H1 (cell line): ENCODE measurements at regions of chr5 and their contacts with region 1.

Region 1: DNA sequence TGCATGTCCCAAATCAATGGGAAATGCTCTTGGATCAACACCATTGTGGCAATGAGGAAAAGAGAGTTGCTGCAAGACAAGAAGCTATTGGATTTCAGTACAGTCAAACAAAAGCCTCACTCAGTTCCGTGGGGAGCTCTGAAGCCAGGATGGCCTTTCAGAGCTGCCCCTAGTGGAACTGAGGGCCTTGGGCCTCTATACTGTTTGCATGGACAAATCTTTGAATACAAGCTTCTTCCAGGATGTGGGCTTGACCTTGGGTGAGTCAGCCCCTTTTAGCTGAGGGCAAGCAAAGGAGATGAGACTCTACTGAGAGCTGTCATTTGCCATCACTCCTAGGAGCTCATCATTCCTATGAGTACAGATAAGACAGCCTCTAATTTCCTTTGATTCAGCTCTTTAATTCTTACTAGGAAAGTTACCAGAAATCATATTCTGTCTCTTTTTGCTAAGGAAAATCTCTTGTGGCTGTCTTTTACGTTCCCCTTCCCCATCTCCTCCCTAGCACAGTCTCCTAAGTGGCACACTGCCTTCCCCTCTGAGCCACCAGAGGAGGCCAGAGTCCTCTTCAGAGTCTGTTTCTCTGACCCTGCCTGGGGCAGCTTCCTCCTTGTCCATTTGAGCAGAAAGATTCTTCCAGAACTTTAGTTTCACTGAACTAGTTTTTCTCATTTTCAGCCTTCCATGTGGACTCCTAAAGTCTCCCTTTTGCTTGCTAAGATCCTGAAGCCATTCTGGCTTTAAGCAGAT is 168.8 kb upstream of the POC5 start:
- DNase-seq: no peak
- H3K4me3 ChIP-seq: no peak overlapping the region
- H3K27ac ChIP-seq: no peak overlapping the region
- H3K4me1 ChIP-seq: no peaks in the 10 kb centered on the region
- H3K27me3 ChIP-seq: no peaks in the 10 kb centered on the region
- CTCF ChIP-seq: peak; percentile 63 to 70 (median 67)
- EP300 ChIP-seq: no peak
- POLR2A ChIP-seq: no peak
- RAD21 ChIP-seq: peak; percentile 82 to 84

Region 2: DNA sequence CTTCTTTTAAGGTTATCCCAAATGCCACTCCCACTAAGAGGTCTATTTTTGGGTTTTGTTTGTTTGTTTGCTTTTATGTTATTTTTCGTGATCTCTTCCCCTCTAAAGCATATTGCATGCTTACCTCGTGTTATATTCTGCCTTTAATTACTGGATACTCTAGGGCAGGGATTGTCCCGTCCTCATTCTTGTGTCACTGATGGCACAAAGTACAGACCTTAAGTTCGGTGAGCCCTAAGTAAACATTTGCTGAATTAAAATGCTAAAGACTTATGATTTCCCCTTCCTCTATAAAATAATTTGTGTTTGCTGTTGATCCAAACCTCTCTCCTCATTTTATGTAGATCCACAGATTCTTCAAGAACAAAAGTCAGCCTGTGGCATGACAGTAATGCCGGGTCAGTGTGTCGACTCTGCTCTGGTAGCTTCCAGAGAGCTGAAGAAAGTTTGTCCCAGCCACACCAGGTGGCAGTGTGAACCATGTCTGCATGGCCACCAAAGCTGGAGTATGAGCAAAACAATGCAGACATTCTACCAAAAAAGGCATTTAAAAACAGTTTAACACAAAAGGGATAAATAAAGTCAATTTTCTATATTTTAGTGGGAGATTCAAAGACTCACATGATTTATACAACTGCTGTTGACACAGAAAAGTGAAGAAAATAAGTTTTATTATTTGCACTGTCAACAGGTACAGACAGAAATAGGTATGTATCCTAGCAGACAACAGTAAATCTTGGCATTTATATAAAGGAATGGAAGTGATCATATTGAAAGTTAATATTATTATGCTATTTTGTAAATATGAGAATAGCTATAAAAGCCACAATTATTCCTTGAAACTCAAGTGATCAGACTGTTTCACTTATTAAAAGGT is 150.9 kb before region 1 on chr5:
- CTCF ChIA-PET with region 1: interaction called, 21 read pairs
- POLR2A ChIA-PET with region 1: no interaction called
- DNase-seq: peak; percentile 23 to 51
- H3K4me3 ChIP-seq: no peak overlapping the region
- H3K27ac ChIP-seq: no peak overlapping the region
- H3K4me1 ChIP-seq: no peaks in the 10 kb centered on the region
- H3K27me3 ChIP-seq: no peaks in the 10 kb centered on the region
- CTCF ChIP-seq: peak; percentile 56 to 70 (median 61)
- EP300 ChIP-seq: no peak
- POLR2A ChIP-seq: no peak
- RAD21 ChIP-seq: peak; percentile 80 to 81

Region 3: DNA sequence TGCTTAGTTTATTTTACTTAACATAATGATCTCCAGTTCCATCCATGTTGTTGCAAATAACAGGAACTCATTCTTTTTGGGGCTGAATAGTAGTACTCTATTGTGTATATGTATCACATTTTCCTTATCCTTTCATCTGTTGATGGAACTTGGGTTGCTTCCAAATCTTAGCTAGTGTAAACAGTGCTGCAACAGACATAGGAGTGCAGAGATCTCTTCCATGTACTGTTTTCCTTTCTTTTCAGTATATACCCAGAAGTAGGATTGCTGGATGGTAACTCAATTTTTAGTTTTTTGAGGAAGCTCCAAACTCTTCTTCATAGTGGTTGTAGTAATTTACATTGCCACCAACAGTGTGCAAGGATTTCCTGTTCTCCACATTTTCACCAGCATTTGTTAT is 30.0 kb before region 1 on chr5:
- CTCF ChIA-PET with region 1: no interaction called
- POLR2A ChIA-PET with region 1: no interaction called
- DNase-seq: no peak
- H3K4me3 ChIP-seq: no peak overlapping the region
- H3K27ac ChIP-seq: no peak overlapping the region
- H3K4me1 ChIP-seq: no peaks in the 10 kb centered on the region
- H3K27me3 ChIP-seq: no peaks in the 10 kb centered on the region
- CTCF ChIP-seq: no peak
- EP300 ChIP-seq: no peak
- POLR2A ChIP-seq: no peak
- RAD21 ChIP-seq: no peak

Region 4: GRCh38 chr5:76041863-76042262 is 155.8 kb after region 1 on chr5:
- CTCF ChIA-PET with region 1: interaction called, 11 read pairs
- POLR2A ChIA-PET with region 1: no interaction called
- DNase-seq: peak; percentile 9 to 71
- H3K4me3 ChIP-seq: no peak overlapping the region
- H3K27ac ChIP-seq: no peak overlapping the region
- H3K4me1 ChIP-seq: no peaks in the 10 kb centered on the region; a peak in 1 of 7 replicates
- H3K27me3 ChIP-seq: no peaks in the 10 kb centered on the region
- CTCF ChIP-seq: no peak
- EP300 ChIP-seq: no peak
- POLR2A ChIP-seq: no peak
- RAD21 ChIP-seq: peak in 1 of 2 experiments; percentile 28; a peak in 1 of 4 replicates

Region 5: GRCh38 chr5:76074487-76075065 is 188.6 kb after region 1 on chr5:
- CTCF ChIA-PET with region 1: interaction called, 14 read pairs
- POLR2A ChIA-PET with region 1: no interaction called
- DNase-seq: no peak
- H3K4me3 ChIP-seq: no peak overlapping the region
- H3K27ac ChIP-seq: no peak overlapping the region
- H3K4me1 ChIP-seq: no peaks in the 10 kb centered on the region
- H3K27me3 ChIP-seq: peaks cover 0 to 12% (median 3%) of the 10 kb centered on the region in 4 experiments; a peak in 5 of 7 replicates
- CTCF ChIP-seq: peak; percentile 42 to 88 (median 88)
- EP300 ChIP-seq: no peak
- POLR2A ChIP-seq: no peak
- RAD21 ChIP-seq: peak; percentile 93 to 95

Region 6: GRCh38 chr5:76209297-76209696 is 323.3 kb after region 1 on chr5:
- CTCF ChIA-PET with region 1: interaction called, 12 read pairs
- POLR2A ChIA-PET with region 1: no interaction called
- DNase-seq: no peak
- H3K4me3 ChIP-seq: no peak overlapping the region
- H3K27ac ChIP-seq: no peak overlapping the region
- H3K4me1 ChIP-seq: no peaks in the 10 kb centered on the region
- H3K27me3 ChIP-seq: no peaks in the 10 kb centered on the region
- CTCF ChIP-seq: peak in 2 of 3 experiments; percentile 24 to 37; a peak in 1 of 4 replicates
- EP300 ChIP-seq: no peak
- POLR2A ChIP-seq: no peak
- RAD21 ChIP-seq: peak; percentile 56 to 59